Left lung (tissue), 14 donors: ENCODE measurements at regions of chr4 and their contacts with region 1.

Region 1: DNA sequence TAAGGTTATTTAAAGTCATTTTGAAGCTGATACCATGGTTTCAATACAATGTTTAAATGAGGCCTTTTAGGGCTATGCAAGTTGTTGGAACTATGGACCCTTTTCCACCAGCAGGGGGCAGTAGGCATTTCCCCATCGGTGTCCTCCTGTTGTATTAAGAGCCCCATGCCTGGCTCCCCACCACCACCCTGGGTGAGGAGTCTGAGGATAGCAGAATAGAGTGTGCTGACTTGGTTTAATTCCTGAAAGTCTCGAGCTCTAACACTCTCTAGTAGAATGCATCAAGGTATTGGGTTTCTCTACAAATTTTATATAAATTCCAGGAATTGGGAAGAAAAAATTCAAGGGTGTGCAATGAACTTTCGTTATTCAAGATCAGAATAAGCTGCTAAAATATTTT is 234.8 kb upstream of the JADE1 start:
- DNase-seq: peak in 1 of 4 donors; percentile 71
- ATAC-seq: peak; percentile 85
- H3K4me3 ChIP-seq: no peak overlapping the region
- H3K27ac ChIP-seq: peak overlapping the region; percentile 4 to 7
- H3K4me1 ChIP-seq: peaks cover 15 to 35% of the 10 kb centered on the region in 2 donors
- H3K27me3 ChIP-seq: no peaks in the 10 kb centered on the region
- CTCF ChIP-seq: peak; percentile 46 to 53

Region 2: DNA sequence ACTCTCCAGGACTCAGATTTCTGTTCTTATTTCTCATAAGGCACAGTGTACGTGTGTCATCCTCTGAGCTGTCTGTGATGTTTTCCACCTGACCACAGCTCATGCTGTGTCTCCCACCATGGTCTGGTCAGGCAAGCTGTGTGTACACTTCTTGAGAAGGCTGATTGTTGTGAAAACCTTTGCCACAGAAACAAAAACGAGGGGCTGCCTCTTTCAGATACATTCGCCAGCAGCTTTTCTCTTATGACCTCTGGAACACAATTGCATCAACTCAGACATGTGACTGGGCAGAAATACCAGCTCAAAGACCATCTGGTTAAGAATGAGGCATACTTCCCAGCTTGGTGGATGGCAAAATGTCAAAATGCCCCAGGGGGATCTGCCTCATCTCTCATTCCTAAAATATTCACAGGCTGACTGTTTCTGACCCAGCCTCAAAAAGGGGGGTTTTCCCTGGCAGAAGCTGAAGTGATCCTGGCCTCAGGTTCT is 333.2 kb before region 1 on chr4:
- intact Hi-C with region 1: no loop called
- DNase-seq: no peak
- ATAC-seq: peak; percentile 37
- H3K4me3 ChIP-seq: no peak overlapping the region
- H3K27ac ChIP-seq: no peak overlapping the region
- H3K4me1 ChIP-seq: no peaks in the 10 kb centered on the region
- H3K27me3 ChIP-seq: no peaks in the 10 kb centered on the region
- CTCF ChIP-seq: no peak

Region 3: DNA sequence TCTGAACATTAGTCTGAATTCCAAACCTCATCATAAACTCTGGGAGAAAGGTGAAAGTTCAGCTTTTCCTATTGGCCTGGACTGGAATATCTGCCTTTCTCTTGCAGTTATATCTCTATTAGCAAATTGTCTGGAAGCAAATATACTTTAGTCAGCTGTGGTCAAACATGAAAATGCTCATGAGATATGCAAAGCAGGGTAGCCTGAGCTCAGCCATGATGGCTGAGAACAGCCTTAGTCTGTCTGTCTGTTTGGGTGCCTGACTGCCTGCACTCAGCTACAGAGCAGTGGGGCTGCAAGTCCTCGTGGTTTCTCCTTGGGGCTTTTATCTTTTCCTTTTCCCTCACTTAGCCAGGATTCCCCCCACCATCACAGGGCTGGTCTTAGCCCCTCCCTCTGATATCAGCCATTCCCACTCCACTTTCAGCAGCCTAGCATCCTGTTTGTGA is 267.6 kb before region 1 on chr4:
- intact Hi-C with region 1: no loop called
- DNase-seq: no peak
- ATAC-seq: no peak
- H3K4me3 ChIP-seq: no peak overlapping the region
- H3K27ac ChIP-seq: no peak overlapping the region
- H3K4me1 ChIP-seq: no peaks in the 10 kb centered on the region
- H3K27me3 ChIP-seq: no peaks in the 10 kb centered on the region
- CTCF ChIP-seq: no peak

Region 4: DNA sequence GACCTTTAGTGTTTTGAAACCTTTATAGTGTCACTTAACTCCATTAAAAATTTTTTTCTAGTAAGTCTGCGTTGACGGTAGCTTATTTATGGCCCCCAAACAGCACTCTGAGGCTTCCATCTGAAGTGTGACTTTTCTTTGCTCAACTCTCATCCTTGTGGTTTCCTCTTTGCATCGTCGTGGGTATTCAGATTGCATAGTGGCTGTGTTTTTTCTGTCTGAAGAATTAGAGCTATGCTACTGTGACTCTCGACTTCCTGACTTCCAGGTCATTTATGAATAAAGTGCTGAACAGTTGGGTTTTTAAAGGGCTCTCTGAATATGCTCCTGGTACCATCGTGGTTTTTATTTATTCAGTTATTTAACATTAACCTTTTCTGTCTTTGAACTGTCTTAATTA is 279.7 kb after region 1 on chr4:
- intact Hi-C with region 1: loop called in 1 of 2 experiments (anchors 10 kb)
- DNase-seq: no peak
- ATAC-seq: no peak
- H3K4me3 ChIP-seq: no peak overlapping the region
- H3K27ac ChIP-seq: peak overlapping the region in 1 of 2 donors; percentile 55
- H3K4me1 ChIP-seq: peaks cover 0 to 8% of the 10 kb centered on the region in 2 donors
- H3K27me3 ChIP-seq: no peaks in the 10 kb centered on the region
- CTCF ChIP-seq: no peak